ENCODE measurements at regions of chr1 and their contacts with region 1.

Region 1: GRCh38 chr1:87386217-87386790 is 57.6 kb downstream of the LMO4 start:
- DNase-seq: no peak

Region 2: DNA sequence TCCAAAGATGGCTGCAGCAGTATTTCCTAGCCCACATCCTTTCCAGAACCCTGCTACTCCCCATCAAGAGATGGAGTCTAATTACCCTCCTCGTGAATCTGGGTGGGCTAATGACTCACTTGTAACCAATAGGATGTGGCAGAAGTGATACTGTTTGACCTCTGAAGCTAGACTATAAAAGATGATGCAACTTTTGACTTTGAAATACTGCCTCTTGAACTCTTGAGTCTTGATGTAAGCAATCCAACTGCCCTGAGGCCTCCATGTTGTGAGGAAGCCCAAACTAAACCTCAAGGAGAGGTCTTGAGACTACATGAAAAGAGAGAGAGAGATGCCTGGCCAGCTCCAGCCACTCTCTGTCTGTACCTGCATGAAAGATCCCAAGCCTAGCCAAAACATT is 28.1 kb before region 1 on chr1:
- intact Hi-C with region 1: loop called in 1 of 2 experiments (anchors 1 kb)
- DNase-seq: no peak